GM10248 (cell line): ENCODE measurements at regions of chr5 and their contacts with region 1.

Region 1: DNA sequence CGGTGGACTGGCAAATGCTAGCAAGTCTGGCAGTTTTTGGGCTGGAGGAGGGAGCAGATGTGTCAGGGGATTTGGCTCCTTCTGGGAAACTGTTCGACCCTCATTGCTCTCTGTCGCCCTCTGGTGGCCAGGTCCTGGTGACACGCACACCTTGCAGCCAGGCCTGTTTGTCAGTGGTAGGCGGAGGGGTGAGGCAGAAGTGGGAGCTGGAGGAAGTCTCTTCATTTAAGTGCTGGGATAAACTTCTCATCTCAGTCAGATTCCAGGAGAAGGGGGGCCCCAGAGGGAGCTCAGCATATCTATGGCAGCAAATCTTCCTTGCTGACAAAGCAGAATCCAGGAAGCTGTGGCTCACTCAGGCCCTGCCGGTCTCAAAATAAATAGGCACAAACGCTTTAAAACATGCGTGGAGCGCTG is 326.5 kb downstream of the ZSWIM6 start:
- DNase-seq: peak; percentile 75
- CTCF ChIP-seq: peak; percentile 99

Region 2: GRCh38 chr5:60959156-60959555 is 699.4 kb before region 1 on chr5:
- CTCF ChIA-PET with region 1: interaction called, 14 read pairs
- POLR2A ChIA-PET with region 1: no interaction called
- DNase-seq: no peak
- CTCF ChIP-seq: no peak

Region 3: GRCh38 chr5:61586096-61587084 is 72.2 kb before region 1 on chr5:
- CTCF ChIA-PET with region 1: interaction called, 12 read pairs
- POLR2A ChIA-PET with region 1: no interaction called
- DNase-seq: no peak
- CTCF ChIP-seq: no peak

Region 4: GRCh38 chr5:61641747-61642578 is 16.6 kb before region 1 on chr5:
- CTCF ChIA-PET with region 1: interaction called, 27 read pairs
- POLR2A ChIA-PET with region 1: interaction called, 3 read pairs
- DNase-seq: no peak
- CTCF ChIP-seq: peak; percentile 27

Region 5: DNA sequence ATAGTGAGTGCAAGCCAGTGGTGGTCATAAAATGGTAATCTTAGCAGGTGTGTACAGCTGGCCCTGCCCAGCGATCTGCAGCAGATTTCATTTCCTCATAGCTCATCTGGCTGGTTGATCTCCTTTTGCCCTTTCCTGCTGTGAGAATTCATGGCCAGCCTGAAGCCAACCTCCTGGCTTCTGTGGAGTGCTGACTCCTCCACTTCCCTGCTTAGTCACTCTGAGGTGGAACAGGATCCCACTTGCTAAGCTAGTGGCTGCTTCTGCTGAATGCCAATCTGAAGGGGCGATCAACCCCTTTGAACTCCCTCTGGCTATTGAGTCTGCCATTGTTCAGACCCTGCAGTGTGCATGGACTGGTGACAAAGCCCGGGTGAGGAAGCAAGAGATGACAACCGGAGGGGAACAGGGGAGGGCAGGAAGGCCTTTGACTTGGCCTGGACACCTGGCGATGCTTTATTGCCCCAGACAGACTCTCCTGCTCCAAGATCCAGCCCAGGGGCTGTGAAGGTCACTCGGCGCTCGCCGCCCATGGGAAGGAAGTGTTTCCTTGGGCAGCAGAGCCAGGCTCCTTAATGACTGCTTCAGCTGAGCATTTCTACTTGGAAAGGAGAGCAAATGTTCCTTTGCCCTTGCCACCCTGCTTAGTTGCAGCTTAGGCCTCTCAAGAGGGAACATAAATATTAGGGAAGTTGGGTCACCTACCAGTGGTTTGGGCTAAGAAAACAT is 14.6 kb after region 1 on chr5:
- CTCF ChIA-PET with region 1: interaction called, 23 read pairs
- POLR2A ChIA-PET with region 1: no interaction called
- DNase-seq: no peak
- CTCF ChIP-seq: no peak